CD4-positive, alpha-beta memory T cell (primary cell): ENCODE measurements at regions of chr20 and their contacts with region 1.

Region 1: GRCh38 chr20:23889775-23890211 is 10.2 kb upstream of the CST5 start:
- DNase-seq: peak; percentile 47 to 65 (median 61)
- H3K4me3 ChIP-seq: no peak overlapping the region
- H3K4me3 Mint-ChIP-seq: no peak overlapping the region
- H3K27ac ChIP-seq: no peak overlapping the region
- H3K27ac Mint-ChIP-seq: no peak overlapping the region
- H3K4me1 ChIP-seq: no peaks in the 10 kb centered on the region
- H3K4me1 Mint-ChIP-seq: no peaks in the 10 kb centered on the region
- H3K27me3 ChIP-seq: no peaks in the 10 kb centered on the region
- H3K27me3 Mint-ChIP-seq: peaks cover 9 to 11% of the 10 kb centered on the region in 2 donors

Region 2: DNA sequence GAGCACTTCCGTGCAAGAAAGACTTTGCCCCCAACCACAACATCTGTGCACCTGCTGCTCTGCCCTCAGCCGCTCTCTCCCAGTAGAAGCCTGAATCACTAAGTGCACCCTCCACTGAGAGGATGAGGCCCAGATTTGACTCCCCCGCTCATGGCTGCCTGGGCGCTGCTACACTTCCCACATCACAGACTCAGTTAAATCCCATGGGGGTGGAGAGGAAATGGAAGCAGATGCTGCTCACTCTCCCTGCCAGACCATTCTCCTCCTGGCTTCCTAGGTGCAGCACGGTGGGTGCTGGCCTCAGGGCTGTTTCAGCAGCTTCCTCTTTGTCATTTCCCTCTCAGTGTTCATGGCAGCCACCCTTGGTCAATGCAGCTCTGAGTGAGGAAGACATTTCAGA is 15.0 kb before region 1 on chr20:
- CTCF ChIA-PET with region 1: no interaction called
- POLR2A ChIA-PET with region 1: no interaction called
- intact Hi-C with region 1: no loop called
- DNase-seq: no peak
- H3K4me3 ChIP-seq: no peak overlapping the region
- H3K4me3 Mint-ChIP-seq: peak overlapping the region in 1 of 8 donors; percentile 24
- H3K27ac ChIP-seq: no peak overlapping the region
- H3K27ac Mint-ChIP-seq: peak overlapping the region in 1 of 7 donors; percentile 48
- H3K4me1 ChIP-seq: no peaks in the 10 kb centered on the region
- H3K4me1 Mint-ChIP-seq: peaks cover 0 to 8% (median 0%) of the 10 kb centered on the region in 4 donors
- H3K27me3 ChIP-seq: no peaks in the 10 kb centered on the region
- H3K27me3 Mint-ChIP-seq: peaks cover 2 to 18% of the 10 kb centered on the region in 2 donors

Region 3: GRCh38 chr20:23937303-23938117 is 47.7 kb after region 1 on chr20:
- CTCF ChIA-PET with region 1: interaction called, 5 read pairs
- POLR2A ChIA-PET with region 1: no interaction called
- intact Hi-C with region 1: loop called (anchors 2 kb)
- DNase-seq: peak; percentile 53 to 68 (median 67)
- H3K4me3 ChIP-seq: no peak overlapping the region
- H3K4me3 Mint-ChIP-seq: no peak overlapping the region
- H3K27ac ChIP-seq: no peak overlapping the region
- H3K27ac Mint-ChIP-seq: no peak overlapping the region
- H3K4me1 ChIP-seq: no peaks in the 10 kb centered on the region
- H3K4me1 Mint-ChIP-seq: no peaks in the 10 kb centered on the region
- H3K27me3 ChIP-seq: no peaks in the 10 kb centered on the region
- H3K27me3 Mint-ChIP-seq: peaks cover 3 to 4% of the 10 kb centered on the region in 2 donors

Region 4: GRCh38 chr20:23953582-23953981 is 63.8 kb after region 1 on chr20:
- CTCF ChIA-PET with region 1: no interaction called
- POLR2A ChIA-PET with region 1: no interaction called
- intact Hi-C with region 1: no loop called
- DNase-seq: no peak
- H3K4me3 ChIP-seq: no peak overlapping the region
- H3K4me3 Mint-ChIP-seq: no peak overlapping the region
- H3K27ac ChIP-seq: no peak overlapping the region
- H3K27ac Mint-ChIP-seq: no peak overlapping the region
- H3K4me1 ChIP-seq: no peaks in the 10 kb centered on the region
- H3K4me1 Mint-ChIP-seq: no peaks in the 10 kb centered on the region
- H3K27me3 ChIP-seq: no peaks in the 10 kb centered on the region
- H3K27me3 Mint-ChIP-seq: peaks cover 6 to 8% of the 10 kb centered on the region in 2 donors

Region 5: GRCh38 chr20:23995905-23996666 is 106.3 kb after region 1 on chr20:
- CTCF ChIA-PET with region 1: interaction called, 5 read pairs
- POLR2A ChIA-PET with region 1: no interaction called
- intact Hi-C with region 1: loop called (anchors 1 kb)
- DNase-seq: peak in 4 of 5 donors; percentile 30 to 45 (median 41)
- H3K4me3 ChIP-seq: no peak overlapping the region
- H3K4me3 Mint-ChIP-seq: peak overlapping the region in 1 of 8 donors; percentile 15
- H3K27ac ChIP-seq: no peak overlapping the region
- H3K27ac Mint-ChIP-seq: peak overlapping the region in 1 of 7 donors; percentile 11
- H3K4me1 ChIP-seq: no peaks in the 10 kb centered on the region
- H3K4me1 Mint-ChIP-seq: no peaks in the 10 kb centered on the region
- H3K27me3 ChIP-seq: no peaks in the 10 kb centered on the region
- H3K27me3 Mint-ChIP-seq: peaks cover 0 to 2% of the 10 kb centered on the region in 2 donors

Region 6: GRCh38 chr20:24160563-24161375 is 271.0 kb after region 1 on chr20:
- CTCF ChIA-PET with region 1: no interaction called
- POLR2A ChIA-PET with region 1: no interaction called
- intact Hi-C with region 1: loop called (anchors 2 kb)
- DNase-seq: no peak
- H3K4me3 ChIP-seq: no peak overlapping the region
- H3K4me3 Mint-ChIP-seq: no peak overlapping the region
- H3K27ac ChIP-seq: no peak overlapping the region
- H3K27ac Mint-ChIP-seq: no peak overlapping the region
- H3K4me1 ChIP-seq: no peaks in the 10 kb centered on the region
- H3K4me1 Mint-ChIP-seq: peaks cover 0 to 2% (median 0%) of the 10 kb centered on the region in 4 donors
- H3K27me3 ChIP-seq: no peaks in the 10 kb centered on the region
- H3K27me3 Mint-ChIP-seq: no peaks in the 10 kb centered on the region